Natural killer cell (primary cell): ENCODE measurements at regions of chr17 and their contacts with region 1.

Region 1: DNA sequence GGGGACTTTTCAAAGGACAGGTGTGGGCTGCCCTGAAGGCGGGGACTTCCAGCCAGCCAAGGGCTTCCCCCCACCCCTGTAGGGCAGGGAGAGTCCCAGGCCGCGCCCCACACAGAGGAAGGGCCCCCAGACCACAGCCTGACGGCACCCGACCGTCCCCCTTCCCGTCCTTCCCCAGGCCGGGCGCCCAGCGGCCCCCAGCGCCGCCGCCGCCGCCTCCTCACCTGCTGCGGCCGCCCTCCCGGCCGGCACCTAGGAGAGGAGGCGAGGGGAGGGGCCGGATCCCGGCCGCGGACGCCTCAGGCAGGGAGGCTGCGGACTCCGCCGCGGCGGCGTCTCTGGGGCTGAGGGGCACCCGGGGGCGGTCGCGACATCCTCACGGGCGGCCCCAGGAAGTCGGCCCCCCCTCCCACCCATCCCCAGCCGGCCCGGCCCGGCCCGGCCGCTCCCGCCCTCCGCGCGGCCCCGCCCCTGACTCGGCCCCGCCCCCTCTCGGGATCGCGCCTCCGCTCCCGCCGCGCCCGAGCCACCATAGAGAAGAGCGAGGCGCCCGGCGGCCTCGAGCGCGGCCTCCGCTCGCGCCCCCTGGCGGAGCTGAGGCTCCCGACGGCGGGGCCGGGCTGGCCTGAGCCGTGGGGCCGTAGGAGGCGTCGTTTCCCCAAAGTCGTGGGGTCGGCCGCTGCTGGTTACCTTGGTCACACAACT is 25.5 kb upstream of the RFFL start:
- DNase-seq: peak; percentile 90 to 95
- ATAC-seq: peak; percentile 79 to 95 (median 82)
- H3K4me3 ChIP-seq: peak overlapping the region; percentile 72
- H3K4me3 Mint-ChIP-seq: peak overlapping the region; percentile 89
- H3K27ac ChIP-seq: peak overlapping the region; percentile 95
- H3K27ac Mint-ChIP-seq: peak overlapping the region; percentile 95 to 97
- H3K4me1 ChIP-seq: peaks cover 25% of the 10 kb centered on the region
- H3K4me1 Mint-ChIP-seq: peaks cover 27 to 29% of the 10 kb centered on the region in 2 donors
- H3K27me3 ChIP-seq: no peaks in the 10 kb centered on the region
- H3K27me3 Mint-ChIP-seq: no peaks in the 10 kb centered on the region
- CTCF ChIP-seq: peak; percentile 78

Region 2: GRCh38 chr17:34961093-34961911 is 127.7 kb before region 1 on chr17 and contains the starts of genes CCT6B and ZNF830:
- intact Hi-C with region 1: loop called (anchors 1 kb)
- DNase-seq: peak; percentile 89 to 97
- ATAC-seq: peak; percentile 92 to 94 (median 93)
- H3K4me3 ChIP-seq: peak within 1 kb of the TSS; percentile 95
- H3K4me3 Mint-ChIP-seq: peak within 1 kb of the TSS; percentile 100
- H3K27ac ChIP-seq: peak within 1 kb of the TSS; percentile 97
- H3K27ac Mint-ChIP-seq: peak within 1 kb of the TSS; percentile 99 to 100
- H3K4me1 ChIP-seq: peaks cover 15% of the 10 kb centered on the region
- H3K4me1 Mint-ChIP-seq: peaks cover 28 to 32% of the 10 kb centered on the region in 2 donors
- H3K27me3 ChIP-seq: no peaks in the 10 kb centered on the region
- H3K27me3 Mint-ChIP-seq: peaks cover 12 to 18% of the 10 kb centered on the region in 2 donors
- CTCF ChIP-seq: no peak
- total RNA-seq, gene CCT6B: 4.1 to 4.7 (median 4.3) TPM
- total RNA-seq, gene ZNF830: 33.2 to 44.4 (median 34.3) TPM

Region 3: GRCh38 chr17:34998205-34998604 is 90.8 kb before region 1 on chr17:
- intact Hi-C with region 1: loop called (anchors 1 kb)
- DNase-seq: peak; percentile 72 to 87
- ATAC-seq: peak; percentile 90 to 99 (median 97)
- H3K4me3 ChIP-seq: no peak overlapping the region
- H3K4me3 Mint-ChIP-seq: no peak overlapping the region
- H3K27ac ChIP-seq: no peak overlapping the region
- H3K27ac Mint-ChIP-seq: peak overlapping the region; percentile 34 to 83
- H3K4me1 ChIP-seq: peaks cover 7% of the 10 kb centered on the region
- H3K4me1 Mint-ChIP-seq: peaks cover 6 to 9% of the 10 kb centered on the region in 2 donors
- H3K27me3 ChIP-seq: no peaks in the 10 kb centered on the region
- H3K27me3 Mint-ChIP-seq: no peaks in the 10 kb centered on the region
- CTCF ChIP-seq: peak; percentile 77

Region 4: DNA sequence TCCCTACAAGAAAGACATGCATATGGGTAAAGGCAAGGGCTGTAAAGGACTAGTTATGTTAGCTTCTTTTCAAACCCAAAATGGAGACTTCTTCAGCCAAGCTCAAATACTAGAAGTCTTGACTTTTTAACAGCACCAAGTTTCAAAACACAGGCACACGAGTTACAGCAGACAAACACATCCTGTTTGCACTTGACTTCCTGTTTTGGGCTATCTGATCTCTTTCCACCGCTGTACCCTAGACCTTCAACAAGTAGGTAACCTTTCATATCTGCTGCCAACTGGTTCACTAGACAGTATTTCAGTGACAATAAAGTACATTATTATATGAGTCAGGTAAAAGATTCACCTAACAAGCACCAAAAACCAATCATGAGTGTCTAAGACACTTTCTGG is 37.9 kb before region 1 on chr17:
- intact Hi-C with region 1: loop called (anchors 1 kb)
- DNase-seq: peak in 1 of 2 donors; percentile 89
- ATAC-seq: peak; percentile 65 to 84 (median 77)
- H3K4me3 ChIP-seq: no peak overlapping the region
- H3K4me3 Mint-ChIP-seq: peak overlapping the region; percentile 84
- H3K27ac ChIP-seq: peak overlapping the region; percentile 83
- H3K27ac Mint-ChIP-seq: peak overlapping the region; percentile 89 to 99
- H3K4me1 ChIP-seq: peaks cover 48% of the 10 kb centered on the region
- H3K4me1 Mint-ChIP-seq: peaks cover 61 to 68% of the 10 kb centered on the region in 2 donors
- H3K27me3 ChIP-seq: no peaks in the 10 kb centered on the region
- H3K27me3 Mint-ChIP-seq: no peaks in the 10 kb centered on the region
- CTCF ChIP-seq: no peak

Region 5: GRCh38 chr17:35119368-35120165 is 30.5 kb after region 1 on chr17 and contains the start of gene RAD51D:
- intact Hi-C with region 1: loop called (anchors 2 kb)
- DNase-seq: peak; percentile 84 to 92
- ATAC-seq: peak; percentile 93 to 97 (median 95)
- H3K4me3 ChIP-seq: peak within 1 kb of the TSS; percentile 95
- H3K4me3 Mint-ChIP-seq: peak within 1 kb of the TSS; percentile 94
- H3K27ac ChIP-seq: peak within 1 kb of the TSS; percentile 82
- H3K27ac Mint-ChIP-seq: peak within 1 kb of the TSS; percentile 83 to 94
- H3K4me1 ChIP-seq: peaks cover 29% of the 10 kb centered on the region
- H3K4me1 Mint-ChIP-seq: peaks cover 32 to 40% of the 10 kb centered on the region in 2 donors
- H3K27me3 ChIP-seq: no peaks in the 10 kb centered on the region
- H3K27me3 Mint-ChIP-seq: no peaks in the 10 kb centered on the region
- CTCF ChIP-seq: peak; percentile 91
- total RNA-seq, gene RAD51D: 15.4 to 27.0 (median 22.7) TPM